Activated T-helper 2 cell treated with anti-CD3 and anti-CD28 coated beads, Interferon-gamma antibody, Interleukin-2, Interleukin-4, amounts not matched to agents 10 μg/mL and 5 μg/mL and 100 μg/mL, durations not matched to agents 14 hours and 24 hours and 36 hours (primary cell): ENCODE measurements at regions of chr13 and their contacts with region 1.

Region 1: GRCh38 chr13:100875392-100876043 is 200.9 kb upstream of the TMTC4 start:
- DNase-seq: no peak
- H3K4me3 Mint-ChIP-seq: no peak overlapping the region
- H3K27ac Mint-ChIP-seq: peak overlapping the region; percentile 72
- H3K4me1 Mint-ChIP-seq: peaks cover 17% of the 10 kb centered on the region
- H3K27me3 Mint-ChIP-seq: peaks cover 13% of the 10 kb centered on the region

Region 2: GRCh38 chr13:100588331-100589177 is 287.0 kb before region 1 on chr13 and contains the start of gene GGACT:
- intact Hi-C with region 1: loop called (anchors 10 kb)
- DNase-seq: peak; percentile 78
- H3K4me3 Mint-ChIP-seq: peak within 1 kb of the TSS; percentile 78
- H3K27ac Mint-ChIP-seq: peak within 1 kb of the TSS; percentile 89
- H3K4me1 Mint-ChIP-seq: peaks cover 42% of the 10 kb centered on the region
- H3K27me3 Mint-ChIP-seq: no peaks in the 10 kb centered on the region
- total RNA-seq, gene GGACT: 5.5 and 7.7 TPM in 2 replicates

Region 3: DNA sequence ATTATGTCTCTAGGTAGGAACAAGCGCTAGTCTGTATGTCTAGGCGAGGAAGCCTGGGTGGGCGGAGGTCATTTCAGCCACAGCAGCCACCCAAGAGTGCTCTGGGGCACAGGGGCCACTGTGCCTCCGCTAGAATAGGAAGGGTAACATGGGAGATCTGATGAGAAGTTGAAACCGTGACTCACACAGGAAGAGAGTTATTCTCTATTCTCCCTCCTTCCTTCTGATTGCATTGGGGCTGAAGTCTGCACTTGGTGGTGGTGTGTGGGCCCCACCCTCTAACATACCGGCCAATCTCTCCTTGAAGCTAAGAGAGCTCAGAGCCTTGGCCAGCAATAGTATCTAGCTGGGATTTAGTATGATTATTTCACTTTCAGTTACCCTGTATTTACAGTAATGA is 266.6 kb before region 1 on chr13:
- intact Hi-C with region 1: loop called (anchors 1 kb)
- DNase-seq: peak; percentile 42
- H3K4me3 Mint-ChIP-seq: peak overlapping the region; percentile 11
- H3K27ac Mint-ChIP-seq: peak overlapping the region; percentile 59
- H3K4me1 Mint-ChIP-seq: peaks cover 28% of the 10 kb centered on the region
- H3K27me3 Mint-ChIP-seq: no peaks in the 10 kb centered on the region

Region 4: GRCh38 chr13:100674848-100675660 is 200.5 kb before region 1 on chr13:
- intact Hi-C with region 1: loop called (anchors 5 kb)
- DNase-seq: peak; percentile 99
- H3K4me3 Mint-ChIP-seq: peak overlapping the region; percentile 82
- H3K27ac Mint-ChIP-seq: peak overlapping the region; percentile 48
- H3K4me1 Mint-ChIP-seq: peaks cover 18% of the 10 kb centered on the region
- H3K27me3 Mint-ChIP-seq: peaks cover 23% of the 10 kb centered on the region

Region 5: GRCh38 chr13:100773923-100774663 is 101.4 kb before region 1 on chr13:
- intact Hi-C with region 1: loop called (anchors 5 kb)
- DNase-seq: no peak
- H3K4me3 Mint-ChIP-seq: no peak overlapping the region
- H3K27ac Mint-ChIP-seq: no peak overlapping the region
- H3K4me1 Mint-ChIP-seq: peaks cover 11% of the 10 kb centered on the region
- H3K27me3 Mint-ChIP-seq: peaks cover 1% of the 10 kb centered on the region

Region 6: GRCh38 chr13:100789968-100790367 is 85.5 kb before region 1 on chr13:
- intact Hi-C with region 1: loop called (anchors 1 kb)
- DNase-seq: no peak
- H3K4me3 Mint-ChIP-seq: no peak overlapping the region
- H3K27ac Mint-ChIP-seq: no peak overlapping the region
- H3K4me1 Mint-ChIP-seq: peaks cover 6% of the 10 kb centered on the region
- H3K27me3 Mint-ChIP-seq: peaks cover 13% of the 10 kb centered on the region

Region 7: DNA sequence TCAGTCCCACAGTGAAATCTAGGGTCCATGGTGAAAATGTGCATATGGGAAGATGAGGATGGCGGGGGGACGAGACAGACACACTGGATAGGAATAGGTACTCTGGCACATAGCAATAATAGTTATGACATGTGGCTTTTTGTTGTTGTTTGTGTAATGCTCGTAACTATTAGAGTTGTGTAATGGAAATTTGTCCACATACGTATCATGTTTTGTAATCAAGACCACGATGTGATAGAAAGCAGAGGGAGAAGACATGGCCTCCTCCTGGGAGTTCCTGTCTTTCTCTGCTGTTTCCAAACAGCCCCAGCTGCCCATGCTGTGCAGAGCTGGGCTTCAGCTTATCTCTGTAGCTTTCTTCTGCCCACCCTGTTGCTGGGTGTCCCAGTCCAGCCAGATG is 15.7 kb before region 1 on chr13:
- intact Hi-C with region 1: no loop called
- DNase-seq: no peak
- H3K4me3 Mint-ChIP-seq: no peak overlapping the region
- H3K27ac Mint-ChIP-seq: no peak overlapping the region
- H3K4me1 Mint-ChIP-seq: no peaks in the 10 kb centered on the region
- H3K27me3 Mint-ChIP-seq: peaks cover 8% of the 10 kb centered on the region

Region 8: GRCh38 chr13:100904293-100904976 is 28.9 kb after region 1 on chr13:
- intact Hi-C with region 1: no loop called
- DNase-seq: no peak
- H3K4me3 Mint-ChIP-seq: no peak overlapping the region
- H3K27ac Mint-ChIP-seq: no peak overlapping the region
- H3K4me1 Mint-ChIP-seq: no peaks in the 10 kb centered on the region
- H3K27me3 Mint-ChIP-seq: peaks cover 5% of the 10 kb centered on the region